ENCODE measurements at regions of chr7 and their contacts with region 1.

Region 1: GRCh38 chr7:128455551-128456254 is at the start of gene HILPDA:
- DNase-seq: peak; percentile 94
- H3K4me3 Mint-ChIP-seq: peak within 1 kb of the TSS; percentile 95
- H3K27ac Mint-ChIP-seq: peak within 1 kb of the TSS; percentile 88
- H3K4me1 Mint-ChIP-seq: peaks cover 14% of the 10 kb centered on the region
- H3K27me3 Mint-ChIP-seq: peaks cover 25% of the 10 kb centered on the region
- CTCF ChIP-seq: no peak
- total RNA-seq, gene HILPDA: 6.2 and 8.3 TPM in 2 replicates

Region 2: DNA sequence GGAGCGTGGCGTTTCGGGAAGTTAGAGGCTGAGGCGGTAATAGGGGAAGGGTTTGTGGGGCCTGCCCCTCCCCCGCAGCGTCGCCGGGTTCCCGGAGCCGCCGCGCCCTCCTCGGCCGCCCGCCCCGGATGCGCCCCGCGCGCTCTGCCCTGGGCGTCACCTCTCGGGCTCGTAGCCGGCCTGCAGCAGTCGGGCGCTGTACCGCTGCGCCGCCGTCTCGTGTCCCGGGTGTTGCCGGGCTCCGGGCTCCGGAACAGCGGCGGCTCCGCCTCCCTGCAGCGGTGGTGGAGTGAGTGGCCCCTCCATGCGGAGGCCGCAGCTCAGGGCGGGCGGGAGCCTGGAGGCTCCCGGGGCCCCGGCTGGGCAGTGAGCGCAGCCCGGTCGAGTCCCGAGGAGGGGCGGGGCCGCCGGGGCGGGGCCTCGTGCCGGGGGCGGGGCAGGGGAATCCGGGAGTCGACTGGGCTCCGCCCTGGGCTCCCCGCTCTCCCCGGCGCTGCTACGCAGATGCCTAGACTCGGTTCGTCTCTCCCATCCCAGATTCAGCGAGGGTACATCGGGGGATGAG is 46.0 kb before region 1 on chr7 and contains the start of gene IMPDH1:
- CTCF ChIA-PET with region 1: interaction called, 34 read pairs
- POLR2A ChIA-PET with region 1: interaction called, 4 read pairs
- intact Hi-C with region 1: no loop called
- DNase-seq: peak; percentile 78
- H3K4me3 Mint-ChIP-seq: peak within 1 kb of the TSS; percentile 86
- H3K27ac Mint-ChIP-seq: peak within 1 kb of the TSS; percentile 51
- H3K4me1 Mint-ChIP-seq: peaks cover 5% of the 10 kb centered on the region
- H3K27me3 Mint-ChIP-seq: no peaks in the 10 kb centered on the region
- CTCF ChIP-seq: no peak
- total RNA-seq, gene IMPDH1: 66.4 and 74.0 TPM in 2 replicates

Region 3: DNA sequence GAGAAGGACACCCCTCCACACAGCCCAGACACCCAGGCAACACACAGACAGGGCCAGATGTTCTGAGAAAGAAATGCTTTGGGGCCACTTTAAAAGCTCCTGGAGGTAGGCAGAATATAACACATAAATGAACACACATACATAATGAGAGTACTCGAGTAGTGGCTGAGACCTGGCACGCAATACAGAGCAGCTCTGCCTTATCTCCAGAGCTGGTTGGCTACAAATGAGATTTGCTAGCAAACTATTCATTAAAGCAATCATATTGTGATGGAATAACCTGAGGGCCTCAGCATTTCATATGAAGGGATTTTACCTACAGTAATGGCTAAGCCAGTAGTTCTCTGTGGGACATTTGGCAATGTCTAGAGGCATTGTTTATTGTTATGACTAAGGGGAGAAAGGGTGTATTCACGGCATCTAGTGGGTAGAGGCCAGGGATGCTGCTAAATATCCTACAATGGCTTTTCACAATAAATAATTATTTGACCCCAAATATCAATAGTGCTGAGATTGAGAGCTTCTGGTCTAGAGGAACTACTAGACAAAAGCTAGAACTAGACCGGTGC is 40.4 kb before region 1 on chr7:
- CTCF ChIA-PET with region 1: interaction called, 34 read pairs
- POLR2A ChIA-PET with region 1: interaction called, 4 read pairs
- intact Hi-C with region 1: no loop called
- DNase-seq: no peak
- H3K4me3 Mint-ChIP-seq: no peak overlapping the region
- H3K27ac Mint-ChIP-seq: no peak overlapping the region
- H3K4me1 Mint-ChIP-seq: no peaks in the 10 kb centered on the region
- H3K27me3 Mint-ChIP-seq: peaks cover 13% of the 10 kb centered on the region
- CTCF ChIP-seq: no peak

Region 4: DNA sequence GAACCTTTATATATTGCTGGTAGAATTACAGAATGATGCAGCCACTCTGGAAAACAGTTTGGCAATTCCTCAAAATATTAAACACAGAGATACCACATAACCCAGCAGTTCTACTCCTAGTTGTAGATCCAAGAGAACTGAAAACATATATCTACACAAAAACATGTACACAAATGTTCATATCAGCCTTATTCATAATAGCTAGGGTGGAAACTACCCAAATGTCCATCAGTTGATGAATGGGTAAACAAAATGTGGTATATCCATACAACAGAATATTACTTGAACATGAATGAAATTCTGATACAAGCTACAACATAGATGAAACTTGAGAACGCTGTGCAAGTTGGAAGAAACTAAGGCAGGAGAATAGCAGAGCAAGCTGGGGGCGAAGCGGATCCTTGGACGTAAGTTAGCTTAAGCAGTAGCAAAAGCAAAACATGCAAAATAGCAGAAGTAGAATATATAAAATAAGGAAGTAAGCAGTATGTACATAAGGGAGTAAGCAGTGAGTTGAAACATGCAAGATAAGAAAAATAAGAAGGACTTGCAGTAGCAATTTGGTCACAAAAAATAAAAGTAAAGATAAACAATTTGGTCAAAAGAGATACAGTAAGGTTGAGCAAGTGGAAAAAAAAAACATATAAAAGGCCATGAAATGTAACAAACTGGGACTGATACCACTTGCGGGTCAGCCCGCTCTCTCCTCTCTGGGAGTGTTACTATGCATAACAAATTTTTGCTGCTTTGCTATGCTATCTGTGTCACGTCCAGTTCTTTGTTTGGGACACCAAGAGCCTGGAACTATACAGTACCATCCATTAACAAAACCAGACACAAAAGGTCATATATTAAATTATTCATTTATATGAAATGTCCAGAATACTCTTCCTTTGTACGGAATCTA is 18.0 kb before region 1 on chr7:
- CTCF ChIA-PET with region 1: interaction called, 269 read pairs
- POLR2A ChIA-PET with region 1: interaction called, 7 read pairs
- intact Hi-C with region 1: no loop called
- DNase-seq: no peak
- H3K4me3 Mint-ChIP-seq: no peak overlapping the region
- H3K27ac Mint-ChIP-seq: no peak overlapping the region
- H3K4me1 Mint-ChIP-seq: no peaks in the 10 kb centered on the region
- H3K27me3 Mint-ChIP-seq: no peaks in the 10 kb centered on the region
- CTCF ChIP-seq: no peak